Stomach (tissue), 19 donors: ENCODE measurements at regions of chr3 and their contacts with region 1.

Region 1: DNA sequence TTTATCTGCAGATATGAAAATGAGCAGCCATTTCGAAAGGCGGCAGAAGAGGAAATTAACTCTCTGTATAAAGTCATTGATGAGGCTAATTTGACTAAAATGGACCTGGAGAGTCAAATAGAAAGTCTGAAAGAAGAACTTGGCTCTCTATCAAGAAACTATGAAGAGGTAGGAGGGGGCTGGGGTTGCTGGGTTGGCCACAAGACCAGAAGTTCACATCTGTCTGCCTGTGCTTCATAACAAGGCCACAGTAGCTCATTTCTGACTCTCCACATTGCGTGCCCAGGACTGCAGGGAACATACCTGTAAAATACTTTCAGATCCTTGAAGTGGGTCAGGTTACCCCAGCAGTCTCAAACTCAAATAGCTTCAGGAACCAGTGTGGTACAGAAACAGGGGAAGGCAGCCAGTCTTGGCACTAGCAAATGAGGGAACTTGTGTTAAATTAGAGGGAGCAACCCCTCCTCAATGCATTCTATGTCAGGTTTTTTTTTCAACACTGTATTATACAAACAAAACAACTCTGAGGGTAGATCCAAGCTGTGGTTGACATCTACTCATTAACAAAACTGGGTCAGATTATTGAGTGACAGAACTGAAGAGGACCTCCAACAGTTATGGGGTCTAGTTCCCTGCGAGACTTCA is 48.7 kb downstream of the BFSP2 start:
- DNase-seq: peak in 1 of 2 donors; percentile 28
- H3K4me3 ChIP-seq: no peak overlapping the region
- H3K27ac ChIP-seq: peak overlapping the region in 2 of 5 donors; percentile 18 to 56
- H3K4me1 ChIP-seq: peaks cover 3 to 35% (median 19%) of the 10 kb centered on the region in 4 donors
- H3K27me3 ChIP-seq: no peaks in the 10 kb centered on the region
- CTCF ChIP-seq: no peak
- EP300 ChIP-seq: no peak
- POLR2A ChIP-seq: no peak

Region 2: DNA sequence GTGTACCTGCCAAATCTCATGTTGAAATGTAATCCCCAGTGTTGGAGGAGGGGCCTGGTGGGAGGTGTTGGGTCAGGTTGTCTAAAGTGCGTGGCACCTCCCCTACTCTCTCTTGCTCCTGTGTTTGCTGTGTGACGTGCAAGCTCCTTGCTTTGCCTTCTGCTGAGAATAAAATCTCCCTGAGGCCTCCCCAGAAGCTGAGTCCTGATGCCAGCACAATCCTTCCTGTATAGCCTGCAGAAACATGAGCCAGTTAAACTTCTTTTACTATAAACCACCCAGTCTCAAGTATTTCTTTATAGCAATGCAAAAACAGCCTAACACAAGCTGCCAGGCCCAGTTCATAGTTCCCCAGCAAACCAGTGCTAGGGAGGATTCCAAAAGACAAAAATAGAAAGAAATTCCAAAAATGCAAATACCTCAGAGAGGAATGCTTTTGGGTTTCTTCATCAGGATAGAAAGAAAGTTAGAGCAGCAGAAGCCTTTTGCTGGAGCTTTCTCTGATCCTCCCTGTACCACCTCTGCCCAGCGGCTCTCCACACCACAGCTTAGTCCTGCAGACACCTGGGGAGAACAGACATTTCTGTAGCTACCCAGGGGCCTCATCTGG is 98.9 kb after region 1 on chr3:
- intact Hi-C with region 1: no loop called
- DNase-seq: peak; percentile 71 to 78
- H3K4me3 ChIP-seq: no peak overlapping the region
- H3K27ac ChIP-seq: peak overlapping the region; percentile 39 to 77 (median 49)
- H3K4me1 ChIP-seq: peaks cover 7 to 21% (median 12%) of the 10 kb centered on the region in 4 donors
- H3K27me3 ChIP-seq: no peaks in the 10 kb centered on the region
- CTCF ChIP-seq: no peak
- EP300 ChIP-seq: no peak
- POLR2A ChIP-seq: no peak

Region 3: GRCh38 chr3:133573054-133573628 is 124.5 kb after region 1 on chr3:
- intact Hi-C with region 1: no loop called
- DNase-seq: peak; percentile 100
- H3K4me3 ChIP-seq: peak overlapping the region; percentile 66 to 80 (median 70)
- H3K27ac ChIP-seq: peak overlapping the region; percentile 91 to 99 (median 97)
- H3K4me1 ChIP-seq: peaks cover 28 to 81% (median 42%) of the 10 kb centered on the region in 4 donors
- H3K27me3 ChIP-seq: no peaks in the 10 kb centered on the region
- CTCF ChIP-seq: peak in 2 of 7 experiments; percentile 11 to 22
- EP300 ChIP-seq: no peak
- POLR2A ChIP-seq: peak in 1 of 4 donors; percentile 45

Region 4: GRCh38 chr3:133588784-133589465 is 140.3 kb after region 1 on chr3:
- intact Hi-C with region 1: loop called (anchors 10 kb)
- DNase-seq: no peak
- H3K4me3 ChIP-seq: no peak overlapping the region
- H3K27ac ChIP-seq: no peak overlapping the region
- H3K4me1 ChIP-seq: peaks cover 0 to 33% (median 15%) of the 10 kb centered on the region in 4 donors
- H3K27me3 ChIP-seq: no peaks in the 10 kb centered on the region
- CTCF ChIP-seq: no peak
- EP300 ChIP-seq: no peak
- POLR2A ChIP-seq: no peak